ENCODE measurements at regions of chr21 and their contacts with region 1.

Region 1: DNA sequence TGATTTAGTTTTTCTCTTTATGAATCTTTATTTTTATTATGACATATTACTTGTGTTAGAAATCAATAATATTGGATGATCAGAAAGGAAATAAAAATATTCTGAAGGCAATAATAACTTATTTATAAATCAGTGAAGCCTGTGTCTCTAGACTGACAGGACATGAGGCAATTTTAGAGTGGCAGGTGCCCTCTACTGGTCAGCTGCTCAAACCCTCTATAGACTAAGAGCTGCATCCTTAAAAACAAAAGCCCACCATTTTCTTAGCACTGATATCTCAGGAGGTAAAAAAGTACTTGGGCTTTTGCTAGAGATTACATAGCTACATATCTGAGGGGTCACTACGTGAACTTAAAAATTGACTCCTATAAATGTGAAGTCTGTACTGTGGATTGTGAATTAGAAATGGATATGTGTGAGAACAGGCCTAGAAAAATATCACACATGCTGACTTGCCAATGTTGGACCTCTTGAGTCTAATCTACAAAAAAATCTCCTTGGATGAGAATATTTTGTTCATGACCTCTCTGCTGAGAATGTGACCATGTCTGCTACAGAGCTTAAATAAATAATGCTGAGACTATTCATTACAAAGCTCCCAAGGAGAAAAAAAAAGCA is 597.9 kb upstream of the ADAMTS5 start:
- DNase-seq: peak; percentile 35 to 46
- H3K4me3 ChIP-seq: no peak overlapping the region
- H3K4me3 Mint-ChIP-seq: no peak overlapping the region
- H3K27ac Mint-ChIP-seq: no peak overlapping the region
- H3K4me1 ChIP-seq: no peaks in the 10 kb centered on the region
- H3K4me1 Mint-ChIP-seq: no peaks in the 10 kb centered on the region
- H3K27me3 ChIP-seq: no peaks in the 10 kb centered on the region
- H3K27me3 Mint-ChIP-seq: no peaks in the 10 kb centered on the region
- CTCF ChIP-seq: peak; percentile 65 to 76

Region 2: GRCh38 chr21:27362249-27362648 is 202.5 kb before region 1 on chr21:
- CTCF ChIA-PET with region 1: no interaction called
- POLR2A ChIA-PET with region 1: no interaction called
- intact Hi-C with region 1: loop called (anchors 1 kb)
- DNase-seq: peak in 1 of 2 experiments; percentile 20
- H3K4me3 ChIP-seq: no peak overlapping the region
- H3K4me3 Mint-ChIP-seq: no peak overlapping the region
- H3K27ac Mint-ChIP-seq: no peak overlapping the region
- H3K4me1 ChIP-seq: peaks cover 30% of the 10 kb centered on the region
- H3K4me1 Mint-ChIP-seq: peaks cover 8% of the 10 kb centered on the region
- H3K27me3 ChIP-seq: no peaks in the 10 kb centered on the region
- H3K27me3 Mint-ChIP-seq: no peaks in the 10 kb centered on the region
- CTCF ChIP-seq: peak in 1 of 2 experiments; percentile 33

Region 3: DNA sequence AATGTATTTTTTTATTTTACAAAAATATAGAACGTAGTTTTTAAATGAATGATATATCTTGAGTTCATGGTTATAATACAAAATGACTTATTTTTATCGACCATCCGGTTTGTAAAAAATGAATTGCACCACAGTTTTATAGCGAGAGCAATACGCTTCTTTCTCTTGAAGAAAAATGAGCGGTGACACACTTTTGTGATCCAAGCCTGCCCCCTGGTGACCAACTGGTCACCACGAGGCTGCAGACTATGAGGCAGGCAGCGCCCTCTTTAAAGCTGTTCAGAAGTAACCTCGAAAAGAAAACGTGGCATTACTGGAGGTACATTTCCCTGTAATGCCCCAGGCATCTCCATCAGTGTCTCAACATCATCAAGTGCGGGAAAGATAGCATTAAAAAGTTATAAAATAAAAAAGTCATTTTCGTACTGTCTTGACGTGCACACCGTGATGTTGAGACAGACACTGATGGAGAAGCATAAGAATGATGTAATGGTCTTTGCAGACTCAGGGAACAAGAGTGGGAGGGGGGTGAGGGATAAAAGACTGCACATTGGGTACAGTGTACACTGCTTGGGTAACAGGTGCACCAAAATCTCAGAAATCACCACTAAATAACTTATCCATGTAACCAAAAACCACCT is 136.3 kb after region 1 on chr21:
- CTCF ChIA-PET with region 1: no interaction called
- POLR2A ChIA-PET with region 1: no interaction called
- intact Hi-C with region 1: loop called (anchors 2 kb)
- DNase-seq: peak; percentile 72 to 79
- H3K4me3 ChIP-seq: no peak overlapping the region
- H3K4me3 Mint-ChIP-seq: no peak overlapping the region
- H3K27ac Mint-ChIP-seq: no peak overlapping the region
- H3K4me1 ChIP-seq: no peaks in the 10 kb centered on the region
- H3K4me1 Mint-ChIP-seq: no peaks in the 10 kb centered on the region
- H3K27me3 ChIP-seq: no peaks in the 10 kb centered on the region
- H3K27me3 Mint-ChIP-seq: peaks cover 7% of the 10 kb centered on the region
- CTCF ChIP-seq: peak; percentile 86 to 90

Region 4: DNA sequence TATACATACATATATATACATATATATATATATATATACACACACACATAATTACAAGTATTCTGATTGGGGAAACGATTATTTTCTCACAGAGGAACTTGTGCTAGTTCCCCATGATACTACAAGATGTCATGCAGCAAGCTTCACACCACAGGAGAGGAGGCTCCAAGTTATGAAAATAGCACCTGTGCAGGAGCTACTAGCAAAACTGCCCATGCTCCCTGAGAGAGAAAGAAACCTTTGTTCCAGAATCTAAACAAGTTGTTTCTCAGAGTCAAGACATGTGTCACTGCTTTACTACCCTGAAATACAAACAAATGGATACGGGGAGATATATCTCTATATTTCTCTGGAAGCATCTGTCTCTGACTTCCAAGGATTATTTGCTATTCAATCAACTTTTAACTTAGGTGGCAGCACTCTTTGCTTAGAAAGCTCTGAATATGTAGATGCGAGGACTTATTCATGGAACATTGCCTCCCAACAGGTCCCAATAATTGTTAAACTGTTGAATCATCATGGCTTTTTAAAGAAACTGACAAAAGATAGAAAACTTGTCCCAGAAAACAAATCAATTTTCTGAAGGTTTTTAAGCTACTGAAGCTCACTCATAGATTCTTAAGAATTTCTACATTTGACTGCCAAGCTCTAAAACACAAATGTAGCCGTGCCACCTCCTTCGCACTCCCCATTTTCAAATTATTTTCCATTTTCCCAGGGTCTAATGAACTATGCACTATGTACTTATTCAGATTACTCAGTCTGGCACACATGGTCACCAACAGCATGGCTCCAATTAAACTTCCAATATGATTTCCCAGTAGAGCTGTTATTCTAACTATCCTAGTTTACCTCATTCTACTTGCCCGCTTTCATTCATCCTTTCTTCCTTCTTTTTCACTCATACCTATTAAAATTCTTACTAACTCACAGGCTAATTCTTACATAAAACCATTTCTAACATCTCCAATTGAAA is 498.7 kb after region 1 on chr21:
- CTCF ChIA-PET with region 1: no interaction called
- POLR2A ChIA-PET with region 1: no interaction called
- intact Hi-C with region 1: loop called (anchors 10 kb)
- DNase-seq: no peak
- H3K4me3 ChIP-seq: no peak overlapping the region
- H3K4me3 Mint-ChIP-seq: no peak overlapping the region
- H3K27ac Mint-ChIP-seq: no peak overlapping the region
- H3K4me1 ChIP-seq: no peaks in the 10 kb centered on the region
- H3K4me1 Mint-ChIP-seq: no peaks in the 10 kb centered on the region
- H3K27me3 ChIP-seq: no peaks in the 10 kb centered on the region
- H3K27me3 Mint-ChIP-seq: no peaks in the 10 kb centered on the region
- CTCF ChIP-seq: no peak

Measured in Caco-2 (cell line).